ENCODE measurements at regions of chr17 and their contacts with region 1.

Region 1: GRCh38 chr17:51764387-51764972 is 394.0 kb downstream of the CA10 start:
- DNase-seq: peak; percentile 75
- H3K4me3 Mint-ChIP-seq: no peak overlapping the region
- H3K27ac Mint-ChIP-seq: no peak overlapping the region
- H3K4me1 Mint-ChIP-seq: no peaks in the 10 kb centered on the region
- H3K27me3 Mint-ChIP-seq: peaks cover 68% of the 10 kb centered on the region
- CTCF ChIP-seq: peak; percentile 88

Region 2: GRCh38 chr17:51572115-51572514 is 192.4 kb before region 1 on chr17:
- CTCF ChIA-PET with region 1: no interaction called
- POLR2A ChIA-PET with region 1: no interaction called
- intact Hi-C with region 1: no loop called
- DNase-seq: no peak
- H3K4me3 Mint-ChIP-seq: no peak overlapping the region
- H3K27ac Mint-ChIP-seq: no peak overlapping the region
- H3K4me1 Mint-ChIP-seq: no peaks in the 10 kb centered on the region
- H3K27me3 Mint-ChIP-seq: peaks cover 21% of the 10 kb centered on the region
- CTCF ChIP-seq: no peak

Region 3: DNA sequence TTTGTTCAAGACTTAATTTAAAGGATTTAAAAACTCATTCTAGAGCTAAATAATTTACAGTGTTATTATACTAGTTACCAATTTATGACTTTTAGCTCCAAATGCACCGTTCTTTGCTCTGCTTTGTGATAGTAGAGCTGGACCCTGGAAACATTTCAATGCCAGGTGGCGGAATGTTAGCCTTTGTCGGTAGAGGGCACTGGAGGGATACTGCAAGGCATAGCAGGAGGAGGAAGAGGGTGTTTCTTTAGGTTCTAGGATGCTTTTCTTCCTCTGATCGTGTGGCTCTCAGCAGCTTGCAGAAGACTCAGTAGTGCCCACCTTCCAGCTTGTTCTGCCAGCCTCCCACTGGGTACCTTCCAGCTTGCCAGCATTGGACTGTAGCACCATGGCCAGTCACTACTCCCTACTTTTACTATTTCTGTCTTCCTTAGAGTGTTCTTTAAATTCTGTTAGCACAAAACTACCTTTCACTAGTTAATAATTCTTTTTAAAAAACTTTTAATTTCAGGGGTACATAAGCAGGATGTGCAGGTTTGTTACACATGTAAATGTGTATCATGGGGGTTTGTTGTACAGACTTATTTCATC is 178.9 kb before region 1 on chr17:
- CTCF ChIA-PET with region 1: interaction called, 8 read pairs
- POLR2A ChIA-PET with region 1: no interaction called
- intact Hi-C with region 1: loop called (anchors 1 kb)
- DNase-seq: peak; percentile 58
- H3K4me3 Mint-ChIP-seq: no peak overlapping the region
- H3K27ac Mint-ChIP-seq: no peak overlapping the region
- H3K4me1 Mint-ChIP-seq: no peaks in the 10 kb centered on the region
- H3K27me3 Mint-ChIP-seq: peaks cover 12% of the 10 kb centered on the region
- CTCF ChIP-seq: peak; percentile 55

Region 4: GRCh38 chr17:51778842-51779241 is 14.4 kb after region 1 on chr17:
- CTCF ChIA-PET with region 1: interaction called, 20 read pairs
- POLR2A ChIA-PET with region 1: no interaction called
- intact Hi-C with region 1: no loop called
- DNase-seq: no peak
- H3K4me3 Mint-ChIP-seq: no peak overlapping the region
- H3K27ac Mint-ChIP-seq: no peak overlapping the region
- H3K4me1 Mint-ChIP-seq: no peaks in the 10 kb centered on the region
- H3K27me3 Mint-ChIP-seq: peaks cover 55% of the 10 kb centered on the region
- CTCF ChIP-seq: no peak

Region 5: DNA sequence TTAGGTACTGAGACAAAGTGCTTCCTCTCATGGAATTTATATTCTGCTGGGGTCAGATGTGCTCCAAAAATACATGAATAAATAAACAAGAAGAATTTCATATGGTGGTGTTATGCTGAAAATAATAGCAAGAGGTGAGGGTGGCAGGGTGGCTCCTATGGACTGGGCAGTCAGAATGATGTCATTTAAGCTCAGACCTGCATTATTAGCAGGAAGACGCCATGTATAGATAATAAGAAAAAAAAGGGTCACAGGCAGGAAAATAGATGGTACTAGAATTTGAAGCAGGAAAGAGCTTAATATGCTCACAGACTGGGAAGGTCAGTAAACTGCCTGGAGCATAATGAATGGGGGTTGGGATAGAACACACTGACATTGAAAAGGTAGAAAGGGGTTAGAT is 334.4 kb after region 1 on chr17:
- CTCF ChIA-PET with region 1: interaction called, 124 read pairs
- POLR2A ChIA-PET with region 1: no interaction called
- intact Hi-C with region 1: no loop called
- DNase-seq: no peak
- H3K4me3 Mint-ChIP-seq: no peak overlapping the region
- H3K27ac Mint-ChIP-seq: no peak overlapping the region
- H3K4me1 Mint-ChIP-seq: no peaks in the 10 kb centered on the region
- H3K27me3 Mint-ChIP-seq: peaks cover 16% of the 10 kb centered on the region
- CTCF ChIP-seq: no peak

Region 6: DNA sequence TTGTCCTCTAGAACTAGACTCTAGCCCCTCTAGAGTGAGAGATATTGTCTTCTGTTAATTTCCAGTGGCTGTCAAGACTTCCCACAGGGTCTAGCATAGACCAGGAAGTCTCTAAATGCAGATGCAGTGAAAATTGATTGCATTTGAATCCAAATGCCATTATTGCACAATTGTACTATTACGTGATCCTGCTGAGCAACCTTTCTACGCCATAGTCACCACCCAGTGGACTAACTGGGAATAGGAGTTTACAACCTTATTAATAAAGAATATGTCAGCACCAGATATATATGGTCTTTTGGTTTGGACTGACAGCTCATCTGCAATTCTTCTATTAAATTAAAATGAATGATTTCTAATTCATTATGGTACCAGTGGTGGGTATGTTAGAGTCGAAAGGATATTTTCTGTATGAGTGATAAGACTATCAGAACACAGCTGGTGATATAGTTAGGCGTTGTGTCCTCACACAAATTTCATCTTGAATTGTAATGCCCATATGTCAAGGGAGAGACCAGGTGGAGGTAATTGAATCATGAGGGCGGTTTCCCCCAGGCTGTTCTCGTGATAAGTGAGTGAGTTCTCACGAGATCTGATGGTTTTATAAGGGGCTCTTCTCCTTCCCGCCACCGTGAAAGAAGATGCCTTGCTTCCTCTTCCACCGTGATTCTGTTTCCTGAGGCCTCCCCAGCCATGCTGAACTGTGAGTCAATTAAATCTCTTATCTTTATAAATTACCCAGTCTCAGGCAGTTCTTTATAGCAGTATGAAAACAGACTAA is 532.9 kb after region 1 on chr17:
- CTCF ChIA-PET with region 1: interaction called, 5 read pairs
- POLR2A ChIA-PET with region 1: no interaction called
- intact Hi-C with region 1: loop called (anchors 1 kb)
- DNase-seq: peak; percentile 50
- H3K4me3 Mint-ChIP-seq: no peak overlapping the region
- H3K27ac Mint-ChIP-seq: no peak overlapping the region
- H3K4me1 Mint-ChIP-seq: no peaks in the 10 kb centered on the region
- H3K27me3 Mint-ChIP-seq: peaks cover 94% of the 10 kb centered on the region
- CTCF ChIP-seq: peak; percentile 48

Measured in MCF 10A (cell line).